Sciatic nerve (tissue), 2 donors: ENCODE measurements at regions of chr6 and their contacts with region 1.

Region 1: GRCh38 chr6:33579828-33580714 is at the start of gene BAK1:
- DNase-seq: peak; percentile 92
- ATAC-seq: peak; percentile 96
- total RNA-seq, gene BAK1: 10.7 TPM

Region 2: DNA sequence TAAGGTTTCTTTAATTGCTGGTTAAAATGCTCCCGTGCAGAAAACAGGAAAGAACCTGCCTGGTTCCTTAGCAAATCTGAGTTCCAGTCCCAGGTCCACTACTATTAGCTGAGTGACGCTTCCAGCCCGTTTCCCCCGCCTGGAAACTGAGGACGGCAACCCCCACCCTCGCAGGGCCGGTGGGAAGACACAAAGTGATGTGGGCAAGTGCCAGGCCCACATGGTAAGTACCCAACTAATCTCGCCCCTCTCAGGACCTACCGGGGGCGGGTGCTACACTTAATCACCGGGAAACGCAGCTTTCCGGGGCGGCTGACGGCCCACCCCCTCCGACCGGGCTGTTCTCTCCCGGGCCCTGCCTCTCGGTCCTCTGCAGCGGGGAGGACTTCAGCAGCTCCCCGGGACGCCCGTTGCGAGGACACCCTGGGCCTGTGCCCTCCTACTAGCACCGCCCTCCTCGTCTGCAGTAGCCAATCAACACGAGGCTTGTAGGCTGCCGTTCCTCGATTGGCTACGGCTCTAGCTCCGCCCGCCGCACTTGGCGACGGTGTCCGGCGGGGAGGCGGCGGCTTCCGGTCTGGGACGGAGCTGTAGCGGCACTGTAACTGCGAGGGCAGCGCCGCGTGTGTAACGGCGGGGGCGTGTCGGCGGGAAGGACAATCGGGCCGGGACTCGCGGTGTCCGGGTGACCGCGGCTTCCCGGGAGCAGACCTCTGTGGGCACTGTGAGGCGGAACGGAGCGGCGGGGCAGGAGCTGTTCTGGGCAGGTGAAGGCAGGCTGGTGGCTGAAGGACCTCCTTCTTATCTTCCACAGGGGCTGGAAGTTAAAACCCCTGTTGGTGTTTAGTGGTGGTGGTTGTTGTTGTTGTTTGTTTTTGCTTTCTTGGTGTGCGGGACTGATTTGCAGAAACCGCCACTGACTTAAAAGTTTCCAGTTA is 125.8 kb before region 1 on chr6 and contains the start of gene ZBTB9:
- intact Hi-C with region 1: loop called (anchors 10 kb)
- DNase-seq: peak; percentile 97
- ATAC-seq: peak; percentile 99
- total RNA-seq, gene ZBTB9: 6.5 TPM

Region 3: DNA sequence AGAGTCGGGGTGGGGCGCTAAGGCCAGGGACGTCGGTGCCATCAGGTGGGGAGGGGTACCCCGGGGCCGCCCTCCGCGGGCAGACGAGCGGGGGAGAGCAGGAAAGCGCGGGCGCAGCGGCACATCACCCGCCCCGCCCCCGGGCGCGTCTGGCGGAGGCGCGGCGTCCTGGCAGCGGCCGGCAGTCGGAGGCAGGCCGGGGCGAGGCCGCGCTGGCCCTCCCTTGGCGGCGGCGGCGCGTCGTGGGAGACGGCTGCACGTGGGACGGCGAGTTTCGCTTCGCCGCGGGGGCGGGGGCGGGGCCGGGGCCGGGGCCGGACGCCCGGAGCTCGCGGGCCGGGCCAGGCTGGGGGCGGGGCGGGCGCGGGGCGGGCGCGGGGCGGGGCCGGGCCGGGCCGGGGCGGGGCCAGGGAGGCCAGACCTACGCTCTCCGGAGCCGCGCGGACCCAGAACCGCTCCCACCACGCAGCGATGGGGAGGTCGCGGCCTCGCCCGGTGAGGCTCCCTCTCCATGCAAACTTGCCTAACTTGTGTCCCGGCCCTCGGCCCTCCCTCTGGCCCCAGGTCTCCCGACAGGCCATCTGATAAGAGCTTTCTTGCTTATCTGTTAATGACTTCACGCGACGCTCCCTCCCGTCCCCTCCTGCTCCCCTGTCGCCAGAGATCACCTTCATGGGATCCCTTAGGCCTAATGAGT is 53.5 kb after region 1 on chr6:
- intact Hi-C with region 1: no loop called
- DNase-seq: peak; percentile 86
- ATAC-seq: peak; percentile 85

Region 4: GRCh38 chr6:33672808-33673207 is 92.7 kb after region 1 on chr6:
- intact Hi-C with region 1: no loop called
- DNase-seq: peak; percentile 92
- ATAC-seq: peak; percentile 84

Region 5: DNA sequence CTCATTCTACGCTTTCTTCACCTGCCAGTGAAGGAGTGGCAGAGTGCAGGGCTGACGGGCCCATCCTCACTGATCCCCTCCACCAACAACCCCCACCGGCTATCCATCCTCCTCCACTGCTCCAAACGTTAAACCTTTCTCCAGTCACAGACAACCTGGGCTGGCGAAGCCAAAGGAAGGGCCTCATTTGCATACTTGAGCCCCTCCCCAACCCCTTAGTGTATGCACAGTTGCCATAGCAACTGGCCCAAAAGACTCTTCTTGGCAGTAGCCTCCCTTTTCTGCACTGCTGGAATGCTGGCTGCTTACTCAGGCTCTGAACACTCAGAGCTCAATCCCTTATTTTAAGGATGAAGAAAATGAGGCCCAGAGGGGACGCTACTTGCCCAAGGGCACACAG is 435.5 kb after region 1 on chr6:
- intact Hi-C with region 1: no loop called
- DNase-seq: no peak
- ATAC-seq: no peak